Heart left ventricle (tissue), 16 donors: ENCODE measurements at regions of chr10 and their contacts with region 1.

Region 1: DNA sequence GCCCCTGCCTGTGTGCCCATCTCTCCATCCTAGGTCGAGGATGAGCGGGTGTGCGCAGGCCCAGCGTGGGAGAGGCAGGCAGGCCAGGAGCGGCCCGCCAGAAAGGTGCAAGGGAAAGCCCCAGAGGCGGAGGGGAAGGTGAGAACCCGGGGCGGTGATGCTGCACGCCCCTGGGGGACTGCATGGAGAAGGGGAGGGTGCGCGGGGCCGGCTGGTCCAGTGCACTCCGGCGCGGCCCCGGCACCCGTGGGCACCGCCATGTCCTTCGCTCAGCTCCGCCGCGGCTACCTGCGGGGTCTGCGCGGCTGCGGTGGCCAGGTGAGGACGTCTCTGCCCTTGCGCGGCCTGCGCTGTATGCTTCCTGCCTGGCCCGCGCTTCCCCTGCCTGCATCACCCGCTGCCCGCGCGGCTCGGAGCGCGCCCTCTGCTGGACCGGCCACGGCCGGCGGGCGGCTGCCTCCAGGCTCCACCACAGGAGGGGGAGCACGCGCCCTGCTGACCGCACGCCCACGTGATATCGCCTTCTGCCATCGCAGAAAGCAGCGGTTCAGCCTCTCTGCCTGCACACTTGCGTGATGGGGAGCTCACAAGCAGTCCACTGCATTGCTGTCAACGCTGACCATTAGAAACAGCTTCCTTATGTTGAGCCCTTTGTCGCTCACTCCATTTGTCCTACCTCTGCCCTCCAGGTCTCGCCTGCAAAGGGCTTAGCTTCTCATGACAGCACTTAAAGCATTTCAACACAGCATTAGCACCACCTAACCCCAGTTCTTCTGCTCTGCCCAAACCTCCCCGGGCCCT is 73.9 kb downstream of the CXCL12 start:
- DNase-seq: peak; percentile 88 to 93 (median 90)
- ATAC-seq: peak; percentile 84 to 99 (median 97)
- H3K4me3 ChIP-seq: peak overlapping the region in 10 of 12 donors; percentile 38 to 60 (median 50)
- H3K27ac ChIP-seq: peak overlapping the region in 6 of 12 donors; percentile 18 to 73 (median 48)
- H3K4me1 ChIP-seq: peaks cover 0 to 12% (median 10%) of the 10 kb centered on the region in 12 donors
- H3K27me3 ChIP-seq: no peaks in the 10 kb centered on the region
- CTCF ChIP-seq: peak; percentile 79 to 100 (median 98)
- POLR2A ChIP-seq: no peak

Region 2: DNA sequence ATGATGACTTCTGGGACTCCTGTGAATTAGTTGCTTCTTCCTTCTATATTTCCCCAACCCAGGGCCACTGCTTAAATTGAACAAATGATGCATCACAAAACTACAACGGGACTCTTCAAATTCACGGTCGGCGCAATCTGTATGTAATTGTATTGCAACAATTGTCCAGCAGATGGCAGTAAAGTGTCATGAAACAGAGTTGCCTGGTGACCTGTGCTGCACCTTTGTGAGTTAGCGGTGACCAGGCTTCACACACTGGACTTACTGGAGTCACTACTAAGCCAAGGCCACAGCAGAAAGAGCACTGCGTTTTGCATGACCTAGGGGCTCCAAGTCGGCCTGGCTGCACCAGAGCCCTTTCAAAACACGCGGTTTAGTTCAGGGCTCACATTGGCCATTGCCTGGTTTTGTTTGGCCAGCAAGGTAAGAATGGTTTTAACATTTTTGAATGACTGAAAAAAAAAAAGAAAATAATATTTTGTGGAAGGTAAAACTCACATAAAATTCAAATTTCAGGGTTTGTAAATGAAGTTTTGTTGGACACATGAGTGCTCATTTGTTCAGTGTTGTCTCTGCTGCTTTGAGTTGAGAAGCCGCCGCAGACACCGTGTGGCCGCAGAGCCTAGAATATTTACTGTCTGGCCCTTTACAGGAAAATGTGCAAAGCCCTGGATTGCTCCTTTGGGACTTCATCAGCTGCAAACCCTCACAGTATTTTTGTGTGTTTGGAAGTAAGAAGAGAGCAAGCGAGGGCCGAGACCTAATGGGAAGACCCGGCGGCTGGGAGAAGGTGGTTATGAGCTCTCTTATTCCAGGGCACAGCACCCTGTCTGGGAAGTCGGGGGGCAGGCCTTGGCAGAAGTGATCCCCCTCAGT is 639.1 kb before region 1 on chr10:
- intact Hi-C with region 1: loop called in 6 of 10 experiments (anchors 5 to 10 kb)
- DNase-seq: peak in 3 of 5 donors; percentile 52 to 64 (median 52)
- ATAC-seq: peak; percentile 67 to 76 (median 69)
- H3K4me3 ChIP-seq: no peak overlapping the region
- H3K27ac ChIP-seq: no peak overlapping the region
- H3K4me1 ChIP-seq: peaks cover 0 to 20% (median 8%) of the 10 kb centered on the region in 12 donors
- H3K27me3 ChIP-seq: peaks cover 0 to 17% (median 11%) of the 10 kb centered on the region in 9 donors
- CTCF ChIP-seq: peak; percentile 71 to 89 (median 80)
- POLR2A ChIP-seq: no peak

Region 3: DNA sequence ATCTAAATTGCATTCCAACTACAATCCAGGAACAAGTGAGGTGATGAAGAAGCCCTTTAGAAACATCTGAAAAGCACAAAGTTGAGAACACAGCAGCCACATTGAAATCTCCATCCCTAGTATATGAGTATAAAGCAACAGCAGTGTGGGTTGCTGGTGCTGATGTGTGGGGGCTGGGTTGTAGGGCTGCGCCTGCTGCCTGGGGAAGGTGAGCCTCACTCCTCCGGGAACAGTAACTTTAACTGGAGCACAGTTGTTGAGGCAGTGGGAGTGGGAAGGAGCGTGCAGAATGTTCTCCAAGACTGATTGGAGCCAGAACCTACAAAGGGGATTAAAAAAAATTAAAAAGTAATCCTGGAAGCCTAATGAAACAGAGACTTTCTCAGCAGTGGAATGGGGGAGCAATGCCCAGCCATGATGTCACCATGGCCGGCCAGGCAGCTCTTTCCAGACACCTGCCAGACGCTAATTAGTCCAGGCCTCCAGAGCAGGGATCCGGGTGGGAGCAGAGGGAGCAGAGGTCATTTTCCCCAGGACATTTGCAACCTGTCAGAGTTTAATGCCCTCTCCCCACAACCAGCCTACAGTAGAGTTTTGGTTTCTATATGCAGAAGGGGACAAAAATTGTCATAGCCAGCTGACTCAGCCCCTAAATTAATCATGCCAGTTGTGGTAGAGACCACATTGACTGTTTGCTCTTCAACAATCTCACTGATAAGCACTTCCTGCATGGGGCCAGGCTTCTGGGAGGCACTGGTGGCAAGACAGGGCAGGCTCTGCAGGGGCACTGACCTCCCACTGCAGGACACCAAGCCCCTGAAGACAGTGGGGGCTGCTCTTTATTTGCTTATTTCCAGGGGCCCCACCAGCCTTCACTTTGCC is 529.2 kb before region 1 on chr10:
- intact Hi-C with region 1: loop called in 1 of 10 experiments (anchors 10 kb)
- DNase-seq: no peak
- ATAC-seq: peak in 2 of 4 donors; percentile 39 to 63
- H3K4me3 ChIP-seq: no peak overlapping the region
- H3K27ac ChIP-seq: no peak overlapping the region
- H3K4me1 ChIP-seq: peaks cover 0 to 16% (median 1%) of the 10 kb centered on the region in 12 donors
- H3K27me3 ChIP-seq: no peaks in the 10 kb centered on the region
- CTCF ChIP-seq: no peak
- POLR2A ChIP-seq: no peak

Region 4: DNA sequence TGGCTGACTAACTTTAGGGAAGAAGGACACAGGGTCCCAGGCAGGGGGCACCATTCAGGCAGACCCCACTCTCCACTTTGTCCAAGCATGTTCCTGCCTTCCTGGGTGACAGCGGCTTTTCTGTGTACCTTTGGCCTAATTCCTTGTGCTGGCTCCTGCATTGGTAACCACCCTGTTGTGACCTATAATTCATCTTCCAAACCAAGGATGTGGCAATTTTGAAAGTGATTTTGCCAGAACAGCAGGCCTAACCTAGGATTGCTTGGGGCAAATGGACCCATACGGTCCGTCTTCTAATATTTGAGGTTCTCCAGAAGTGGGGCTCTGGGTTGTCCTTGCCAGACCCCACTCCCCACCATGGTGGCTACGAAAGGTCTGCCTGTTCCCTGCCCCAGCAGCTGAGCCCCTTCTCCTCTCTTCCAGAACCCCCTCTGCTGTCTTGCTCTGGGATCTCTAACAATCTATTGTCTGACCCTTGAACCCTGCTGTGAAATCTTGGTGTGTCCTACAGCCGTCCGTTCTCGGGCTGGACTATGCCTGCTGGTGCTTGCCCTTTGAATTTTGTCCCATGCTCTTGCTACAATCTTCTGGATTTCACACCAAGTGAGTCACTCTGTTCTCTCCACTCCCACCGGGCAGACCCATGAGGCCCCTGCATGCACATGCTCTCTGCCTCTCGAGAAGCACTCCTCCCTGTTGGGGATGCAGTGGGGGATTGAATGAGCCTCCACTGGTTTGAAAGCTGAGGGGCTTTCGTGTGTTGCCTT is 242.1 kb before region 1 on chr10:
- intact Hi-C with region 1: loop called in 1 of 10 experiments (anchors 10 kb)
- DNase-seq: peak in 2 of 5 donors; percentile 59 to 68
- ATAC-seq: peak in 2 of 4 donors; percentile 72 to 81
- H3K4me3 ChIP-seq: no peak overlapping the region
- H3K27ac ChIP-seq: peak overlapping the region in 8 of 12 donors; percentile 2 to 58 (median 24)
- H3K4me1 ChIP-seq: peaks cover 0 to 41% (median 13%) of the 10 kb centered on the region in 12 donors
- H3K27me3 ChIP-seq: no peaks in the 10 kb centered on the region
- CTCF ChIP-seq: no peak
- POLR2A ChIP-seq: no peak

Region 5: DNA sequence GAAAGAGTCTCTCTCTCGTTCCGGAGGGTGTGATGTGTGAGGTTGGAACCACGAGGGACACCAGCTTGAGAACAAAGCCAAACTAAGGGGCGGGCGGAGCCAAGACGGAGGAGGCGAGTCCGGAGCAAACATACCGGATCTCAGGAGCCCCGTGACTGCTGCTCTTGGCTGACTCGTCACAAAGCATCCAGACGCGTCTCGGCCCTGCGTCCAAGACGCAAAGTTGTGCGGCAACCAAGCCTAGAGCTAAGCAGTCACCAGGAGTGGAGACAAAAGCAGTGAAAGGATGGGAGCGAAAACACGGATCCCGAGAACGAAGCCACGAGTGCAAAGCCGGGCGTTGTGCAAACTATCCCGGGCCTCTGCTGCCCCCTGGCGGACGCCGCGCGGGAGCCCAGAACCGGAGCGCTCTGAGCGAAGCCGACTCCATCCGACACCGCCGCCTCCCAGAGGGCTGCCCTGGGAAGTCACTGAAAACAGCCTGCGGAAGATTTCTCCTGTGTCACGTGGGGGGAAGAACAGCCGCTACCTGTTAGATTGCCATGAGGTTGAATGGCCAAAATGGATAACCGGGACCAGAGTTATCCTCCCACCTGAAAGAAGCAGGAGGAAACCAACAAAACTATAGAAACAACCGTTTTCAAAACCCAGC is 553.8 kb after region 1 on chr10:
- intact Hi-C with region 1: loop called in 7 of 10 experiments (anchors 2 to 10 kb)
- DNase-seq: peak; percentile 89 to 95 (median 91)
- ATAC-seq: peak; percentile 93 to 97 (median 96)
- H3K4me3 ChIP-seq: peak overlapping the region; percentile 16 to 63 (median 52)
- H3K27ac ChIP-seq: peak overlapping the region in 10 of 12 donors; percentile 4 to 68 (median 56)
- H3K4me1 ChIP-seq: peaks cover 0 to 37% (median 14%) of the 10 kb centered on the region in 12 donors
- H3K27me3 ChIP-seq: peaks cover 0 to 12% (median 0%) of the 10 kb centered on the region in 9 donors
- CTCF ChIP-seq: peak in 11 of 12 donors; percentile 95 to 99 (median 97)
- POLR2A ChIP-seq: peak in 1 of 2 donors; percentile 11